ENCODE measurements at regions of chr16 and their contacts with region 1.

Region 1: DNA sequence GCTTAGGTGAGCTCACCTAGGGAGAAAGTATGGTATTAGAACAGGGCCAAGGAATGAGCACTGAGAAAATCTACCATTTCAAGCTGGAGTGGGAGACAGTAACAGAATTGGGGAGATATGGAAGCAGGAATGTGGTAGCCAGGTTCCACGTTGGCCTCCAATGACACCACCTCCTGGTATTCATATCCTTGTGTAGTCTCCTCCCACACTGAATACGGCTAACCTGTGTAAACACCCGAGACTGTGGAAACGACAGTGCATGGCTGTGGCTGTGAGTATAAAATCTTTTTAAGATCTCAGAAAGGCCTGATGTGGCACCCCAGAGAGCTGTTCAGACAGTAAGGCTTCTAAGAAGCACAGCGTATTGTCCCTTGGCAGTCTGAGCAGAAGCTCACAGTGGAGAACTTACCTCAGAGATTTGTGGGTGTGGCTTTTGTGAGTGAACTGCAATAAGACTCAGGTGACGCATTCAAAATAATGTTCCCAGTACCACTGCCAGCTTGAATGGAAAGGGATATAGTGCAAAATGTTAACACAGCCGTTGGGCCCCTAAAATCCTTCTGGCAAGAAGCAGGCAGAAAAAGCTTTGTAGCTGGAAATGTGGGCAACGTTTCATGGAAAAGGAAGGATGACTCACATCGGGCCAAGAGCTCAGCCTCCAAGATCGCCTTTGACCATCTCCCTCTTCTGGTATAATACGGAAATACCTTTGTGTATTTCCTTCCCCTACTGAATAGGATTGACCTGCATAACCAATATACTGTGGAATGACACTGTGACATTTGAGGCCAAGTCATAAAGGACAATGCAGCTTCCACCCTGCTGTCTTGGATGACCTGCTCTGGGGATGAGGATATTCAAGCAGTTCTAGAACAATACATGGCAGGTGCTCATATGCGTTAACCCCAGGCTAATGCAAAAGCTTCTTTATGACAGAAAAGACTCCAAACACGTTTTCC is 14.3 kb downstream of the SDR42E1 start:
- DNase-seq: no peak
- ATAC-seq: peak; percentile 75
- H3K4me3 Mint-ChIP-seq: no peak overlapping the region
- H3K27ac Mint-ChIP-seq: no peak overlapping the region
- H3K4me1 Mint-ChIP-seq: peaks cover 27% of the 10 kb centered on the region
- H3K27me3 Mint-ChIP-seq: no peaks in the 10 kb centered on the region; the same call in 1 of the 2 replicates
- CTCF ChIP-seq: no peak

Region 2: GRCh38 chr16:81513204-81514040 is 483.5 kb before region 1 on chr16:
- CTCF ChIA-PET with region 1: no interaction called
- POLR2A ChIA-PET with region 1: no interaction called
- DNase-seq: peak; percentile 48
- ATAC-seq: peak; percentile 80
- H3K4me3 Mint-ChIP-seq: no peak overlapping the region
- H3K27ac Mint-ChIP-seq: peak overlapping the region; percentile 58
- H3K4me1 Mint-ChIP-seq: peaks cover 26% of the 10 kb centered on the region
- H3K27me3 Mint-ChIP-seq: no peaks in the 10 kb centered on the region
- CTCF ChIP-seq: no peak

Region 3: GRCh38 chr16:81810894-81811538 is 185.9 kb before region 1 on chr16:
- CTCF ChIA-PET with region 1: no interaction called
- POLR2A ChIA-PET with region 1: no interaction called
- DNase-seq: no peak
- ATAC-seq: no peak
- H3K4me3 Mint-ChIP-seq: no peak overlapping the region
- H3K27ac Mint-ChIP-seq: no peak overlapping the region
- H3K4me1 Mint-ChIP-seq: peaks cover 18% of the 10 kb centered on the region
- H3K27me3 Mint-ChIP-seq: no peaks in the 10 kb centered on the region
- CTCF ChIP-seq: no peak

Region 4: GRCh38 chr16:81885976-81886586 is 110.9 kb before region 1 on chr16:
- CTCF ChIA-PET with region 1: interaction called, 15 read pairs
- POLR2A ChIA-PET with region 1: no interaction called
- DNase-seq: peak; percentile 60
- ATAC-seq: peak; percentile 86
- H3K4me3 Mint-ChIP-seq: no peak overlapping the region
- H3K27ac Mint-ChIP-seq: no peak overlapping the region
- H3K4me1 Mint-ChIP-seq: no peaks in the 10 kb centered on the region
- H3K27me3 Mint-ChIP-seq: no peaks in the 10 kb centered on the region
- CTCF ChIP-seq: peak; percentile 70

Region 5: DNA sequence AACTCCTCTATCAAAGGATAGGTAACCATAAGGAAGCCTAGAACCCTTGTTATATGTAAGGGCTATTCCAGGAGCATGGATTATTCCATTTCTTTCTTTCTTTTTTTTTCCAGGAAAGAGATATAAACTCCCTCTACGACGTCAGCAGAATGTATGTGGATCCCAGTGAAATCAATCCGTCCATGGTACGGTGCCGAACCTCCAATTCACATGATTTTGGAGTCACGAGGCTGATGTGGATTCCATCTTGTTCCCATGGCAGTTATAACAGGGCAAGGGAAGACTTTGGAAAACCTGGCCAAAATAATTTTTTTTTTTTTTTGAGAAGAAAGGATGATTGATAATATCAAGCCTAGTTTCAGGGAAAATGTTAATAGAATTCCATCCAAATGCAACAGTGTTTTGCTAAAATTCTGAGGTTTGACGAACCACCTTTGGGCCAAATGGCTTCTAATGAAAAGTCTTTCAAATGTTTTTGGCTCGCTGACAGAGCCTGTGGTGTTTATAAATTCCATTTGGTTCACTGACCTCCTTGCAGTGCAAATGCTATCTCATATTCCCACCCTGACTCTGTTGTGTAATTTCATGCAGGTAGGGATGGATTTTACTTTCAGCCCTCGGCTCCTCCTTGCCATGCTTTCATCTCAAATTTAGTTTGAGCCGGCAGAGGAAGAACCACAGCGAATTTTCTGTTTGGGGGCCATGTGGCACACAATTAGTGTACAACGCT is 75.7 kb before region 1 on chr16:
- CTCF ChIA-PET with region 1: no interaction called
- POLR2A ChIA-PET with region 1: no interaction called
- DNase-seq: no peak
- ATAC-seq: no peak
- H3K4me3 Mint-ChIP-seq: no peak overlapping the region
- H3K27ac Mint-ChIP-seq: no peak overlapping the region
- H3K4me1 Mint-ChIP-seq: no peaks in the 10 kb centered on the region
- H3K27me3 Mint-ChIP-seq: no peaks in the 10 kb centered on the region
- CTCF ChIP-seq: no peak

Region 6: DNA sequence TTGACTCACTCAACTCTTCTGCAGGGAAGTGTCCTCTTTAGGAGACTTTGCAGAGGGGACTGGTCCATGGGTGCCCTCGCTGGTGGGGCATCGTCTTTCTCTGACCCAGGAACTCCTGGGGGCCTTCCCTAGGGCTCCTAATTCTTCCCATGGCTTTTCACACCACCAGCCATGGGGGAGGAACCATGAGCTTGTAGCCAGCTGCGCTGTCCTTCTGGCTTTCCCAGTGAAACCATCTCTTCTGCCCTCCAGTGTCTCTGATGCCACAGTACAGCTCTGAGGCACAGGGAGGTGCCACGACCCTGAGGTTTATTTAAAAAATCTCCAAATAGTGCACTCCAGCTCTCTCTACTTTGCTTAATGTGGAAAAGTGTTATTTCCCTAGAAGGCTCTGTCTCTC is 64.3 kb before region 1 on chr16:
- CTCF ChIA-PET with region 1: interaction called, 20 read pairs
- POLR2A ChIA-PET with region 1: no interaction called
- DNase-seq: no peak
- ATAC-seq: peak; percentile 66
- H3K4me3 Mint-ChIP-seq: no peak overlapping the region
- H3K27ac Mint-ChIP-seq: no peak overlapping the region
- H3K4me1 Mint-ChIP-seq: peaks cover 16% of the 10 kb centered on the region
- H3K27me3 Mint-ChIP-seq: no peaks in the 10 kb centered on the region
- CTCF ChIP-seq: no peak

Region 7: GRCh38 chr16:81946206-81946605 is 50.7 kb before region 1 on chr16:
- CTCF ChIA-PET with region 1: interaction called, 123 read pairs
- POLR2A ChIA-PET with region 1: interaction called, 3 read pairs
- DNase-seq: no peak
- ATAC-seq: no peak
- H3K4me3 Mint-ChIP-seq: no peak overlapping the region
- H3K27ac Mint-ChIP-seq: no peak overlapping the region
- H3K4me1 Mint-ChIP-seq: peaks cover 40% of the 10 kb centered on the region
- H3K27me3 Mint-ChIP-seq: peaks cover 23% of the 10 kb centered on the region
- CTCF ChIP-seq: no peak

Region 8: DNA sequence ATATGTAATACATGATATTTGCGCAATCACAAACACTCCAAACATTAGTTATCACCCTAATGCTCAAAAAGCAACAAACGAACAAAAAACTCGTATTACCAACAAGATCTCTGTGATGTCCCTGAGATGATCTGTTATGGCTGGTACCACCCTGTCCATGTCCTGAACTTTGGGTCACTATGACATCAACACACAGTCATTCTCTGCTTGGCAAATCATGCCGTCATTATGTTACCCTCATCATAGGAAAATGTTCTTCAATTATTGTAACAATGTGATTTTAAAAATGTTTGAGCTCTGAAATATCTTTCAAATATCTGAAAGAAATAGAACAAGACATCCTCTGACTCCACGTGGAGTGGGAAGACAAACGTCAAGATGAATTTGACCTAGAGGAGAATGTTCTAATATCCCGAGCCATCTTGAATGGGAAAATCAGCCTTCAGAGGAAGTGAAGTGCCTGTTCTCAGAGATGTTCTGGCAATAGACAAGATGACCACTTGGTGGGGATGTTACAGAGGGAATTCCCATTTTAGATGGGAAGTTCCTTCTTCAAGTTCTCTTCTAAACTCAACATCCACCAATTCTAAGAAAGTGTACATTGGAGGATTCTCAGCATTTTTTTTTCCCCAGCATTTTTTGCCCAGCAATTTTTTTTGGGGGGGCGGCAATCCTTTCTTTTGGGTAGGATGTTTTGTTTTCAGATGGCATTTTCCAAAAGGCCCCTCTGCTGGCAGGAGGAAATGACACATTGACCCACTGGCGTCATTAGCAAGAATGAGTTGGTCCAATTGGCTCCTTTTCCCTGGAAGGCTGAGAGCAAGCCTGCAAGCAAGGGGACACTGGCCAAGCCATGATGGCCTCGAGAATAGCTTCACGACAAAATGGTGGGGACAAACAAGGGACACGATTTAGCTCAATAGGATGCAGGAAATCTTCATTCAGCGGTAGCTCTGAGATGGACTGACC is 34.5 kb after region 1 on chr16:
- CTCF ChIA-PET with region 1: no interaction called
- POLR2A ChIA-PET with region 1: no interaction called
- DNase-seq: no peak
- ATAC-seq: peak; percentile 67
- H3K4me3 Mint-ChIP-seq: no peak overlapping the region
- H3K27ac Mint-ChIP-seq: no peak overlapping the region
- H3K4me1 Mint-ChIP-seq: no peaks in the 10 kb centered on the region; the same call in 1 of the 2 replicates
- H3K27me3 Mint-ChIP-seq: no peaks in the 10 kb centered on the region
- CTCF ChIP-seq: peak; percentile 13; the same call in 1 of the 2 replicates

Region 9: DNA sequence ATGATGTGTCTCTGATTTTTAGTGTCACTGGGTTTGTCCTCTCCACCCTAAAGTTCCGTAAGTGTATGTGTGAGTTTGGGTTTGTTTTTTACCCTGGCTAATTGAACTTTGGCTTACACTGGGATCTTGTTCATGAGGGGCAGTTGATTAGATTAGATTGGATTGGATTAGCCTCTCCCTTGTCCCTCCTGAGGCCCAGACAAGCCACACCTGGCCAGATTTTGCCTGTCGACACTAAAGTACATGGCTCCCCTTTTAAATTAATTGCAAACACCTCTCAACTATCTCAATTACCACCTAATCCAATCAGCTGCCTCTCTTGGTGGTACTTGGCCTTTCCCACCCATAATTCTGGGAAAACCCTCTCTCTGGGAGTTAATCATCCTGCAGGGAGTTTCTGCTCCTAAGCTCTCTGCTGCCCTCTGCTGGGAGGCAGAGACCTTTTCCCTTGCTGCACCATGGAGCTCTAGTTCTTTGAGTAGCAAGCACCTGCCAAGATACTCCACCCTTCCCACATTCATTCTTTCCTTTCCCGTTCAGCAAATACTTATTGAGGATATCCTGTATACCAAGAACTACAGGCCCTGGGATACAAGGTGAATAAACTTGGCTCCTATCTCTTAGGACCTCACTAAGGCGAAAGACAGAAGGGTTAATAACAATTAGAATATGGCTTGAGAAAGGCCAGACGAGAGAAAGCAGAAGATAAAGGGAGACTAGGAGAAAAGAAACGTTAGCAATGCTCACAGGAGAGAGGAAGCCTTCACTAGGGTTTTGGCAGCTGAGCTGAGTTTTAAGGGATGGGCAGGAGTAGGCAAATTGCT is 233.1 kb after region 1 on chr16:
- CTCF ChIA-PET with region 1: interaction called, 21 read pairs
- POLR2A ChIA-PET with region 1: no interaction called
- DNase-seq: peak; percentile 86
- ATAC-seq: peak; percentile 94
- H3K4me3 Mint-ChIP-seq: no peak overlapping the region
- H3K27ac Mint-ChIP-seq: no peak overlapping the region
- H3K4me1 Mint-ChIP-seq: peaks cover 8% of the 10 kb centered on the region; the same call in 1 of the 2 replicates
- H3K27me3 Mint-ChIP-seq: no peaks in the 10 kb centered on the region
- CTCF ChIP-seq: peak; percentile 86